IMR-90 (cell line): ENCODE measurements at regions of chr6 and their contacts with region 1.

Region 1: GRCh38 chr6:17347012-17347411 is 46.4 kb upstream of the CAP2 start:
- DNase-seq: no peak
- ATAC-seq: no peak
- H3K4me3 ChIP-seq: no peak overlapping the region
- H3K27ac ChIP-seq: no peak overlapping the region
- H3K4me1 ChIP-seq: no peaks in the 10 kb centered on the region
- H3K27me3 ChIP-seq: no peaks in the 10 kb centered on the region
- CTCF ChIP-seq: no peak
- POLR2A ChIP-seq: no peak
- RAD21 ChIP-seq: no peak

Region 2: GRCh38 chr6:17450832-17451231 is 103.8 kb after region 1 on chr6:
- CTCF ChIA-PET with region 1: interaction called, 13 read pairs
- POLR2A ChIA-PET with region 1: no interaction called
- dilution Hi-C with region 1: no loop called
- in situ Hi-C with region 1: no loop called
- intact Hi-C with region 1: no loop called
- DNase-seq: no peak
- ATAC-seq: no peak
- H3K4me3 ChIP-seq: no peak overlapping the region
- H3K27ac ChIP-seq: no peak overlapping the region
- H3K4me1 ChIP-seq: peaks cover 6% of the 10 kb centered on the region; the same call in 1 of the 2 replicates
- H3K27me3 ChIP-seq: no peaks in the 10 kb centered on the region
- CTCF ChIP-seq: no peak
- POLR2A ChIP-seq: no peak
- RAD21 ChIP-seq: no peak